B cell (primary cell): ENCODE measurements at regions of chr11 and their contacts with region 1.

Region 1: GRCh38 chr11:63478896-63479295 is 12.1 kb downstream of the PLAAT5 start:
- DNase-seq: peak; percentile 76
- ATAC-seq: peak; percentile 66
- H3K4me3 ChIP-seq: no peak overlapping the region
- H3K4me3 Mint-ChIP-seq: no peak overlapping the region
- H3K27ac ChIP-seq: no peak overlapping the region
- H3K27ac Mint-ChIP-seq: no peak overlapping the region
- H3K4me1 ChIP-seq: no peaks in the 10 kb centered on the region
- H3K4me1 Mint-ChIP-seq: no peaks in the 10 kb centered on the region
- H3K27me3 ChIP-seq: peaks cover 0 to 21% (median 19%) of the 10 kb centered on the region in 4 experiments
- H3K27me3 Mint-ChIP-seq: peaks cover 42% of the 10 kb centered on the region
- CTCF ChIP-seq: peak; percentile 95

Region 2: GRCh38 chr11:63155794-63156193 is 323.1 kb before region 1 on chr11:
- CTCF ChIA-PET with region 1: no interaction called
- POLR2A ChIA-PET with region 1: no interaction called
- intact Hi-C with region 1: no loop called
- DNase-seq: no peak
- ATAC-seq: no peak
- H3K4me3 ChIP-seq: no peak overlapping the region
- H3K4me3 Mint-ChIP-seq: no peak overlapping the region
- H3K27ac ChIP-seq: no peak overlapping the region
- H3K27ac Mint-ChIP-seq: no peak overlapping the region
- H3K4me1 ChIP-seq: no peaks in the 10 kb centered on the region
- H3K4me1 Mint-ChIP-seq: no peaks in the 10 kb centered on the region
- H3K27me3 ChIP-seq: peaks cover 0 to 5% (median 2%) of the 10 kb centered on the region in 4 experiments
- H3K27me3 Mint-ChIP-seq: peaks cover 25% of the 10 kb centered on the region
- CTCF ChIP-seq: no peak

Region 3: DNA sequence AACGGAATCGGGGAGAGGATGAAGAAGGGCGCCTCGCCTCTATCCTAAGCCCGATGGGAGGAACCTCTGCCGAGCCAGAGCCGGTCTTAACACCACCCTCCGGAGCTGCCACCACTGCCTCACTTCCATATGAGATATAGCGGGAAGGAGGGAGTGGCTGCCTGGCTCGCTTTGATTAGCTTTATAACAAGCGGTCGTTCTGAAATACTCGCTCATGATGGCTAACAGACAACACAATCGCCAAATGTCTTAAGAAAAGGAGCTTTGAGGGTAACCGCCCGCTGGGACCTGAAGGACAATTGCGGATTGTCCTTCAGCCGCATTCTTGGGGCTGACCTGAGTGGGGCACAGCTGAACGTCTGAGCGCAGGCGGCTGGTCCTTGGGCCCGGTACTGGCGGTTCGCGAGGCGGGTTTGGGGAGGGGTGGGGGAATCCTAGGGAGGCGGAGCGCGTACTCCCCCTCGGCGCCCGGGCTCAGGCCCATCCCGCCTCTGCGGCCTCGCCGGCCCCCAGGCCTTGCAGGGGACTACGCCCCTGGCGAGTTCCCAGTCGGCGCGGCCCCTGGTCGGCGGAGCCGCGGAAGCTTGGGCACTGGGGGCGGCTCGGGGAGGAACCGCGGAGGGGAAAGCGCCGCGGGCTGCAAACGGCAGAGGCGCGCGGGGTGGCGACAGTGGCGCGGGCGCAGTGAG is 11.8 kb after region 1 on chr11 and contains the start of gene PLAAT5:
- CTCF ChIA-PET with region 1: interaction called, 25 read pairs
- POLR2A ChIA-PET with region 1: no interaction called
- intact Hi-C with region 1: no loop called
- DNase-seq: no peak
- ATAC-seq: no peak
- H3K4me3 ChIP-seq: peak within 1 kb of the TSS in 1 of 5 experiments; percentile 6
- H3K4me3 Mint-ChIP-seq: peak within 1 kb of the TSS; percentile 58
- H3K27ac ChIP-seq: no peak within 1 kb of the TSS
- H3K27ac Mint-ChIP-seq: no peak within 1 kb of the TSS
- H3K4me1 ChIP-seq: peaks cover 0 to 7% of the 10 kb centered on the region in 2 donors
- H3K4me1 Mint-ChIP-seq: peaks cover 11% of the 10 kb centered on the region
- H3K27me3 ChIP-seq: peaks cover 0 to 28% (median 20%) of the 10 kb centered on the region in 4 experiments
- H3K27me3 Mint-ChIP-seq: peaks cover 65% of the 10 kb centered on the region
- CTCF ChIP-seq: no peak
- total RNA-seq, gene PLAAT5: not detected in 2 replicates

Region 4: GRCh38 chr11:63508009-63508408 is 29.1 kb after region 1 on chr11:
- CTCF ChIA-PET with region 1: interaction called, 10 read pairs
- POLR2A ChIA-PET with region 1: no interaction called
- intact Hi-C with region 1: no loop called
- DNase-seq: no peak
- ATAC-seq: no peak
- H3K4me3 ChIP-seq: no peak overlapping the region
- H3K4me3 Mint-ChIP-seq: no peak overlapping the region
- H3K27ac ChIP-seq: no peak overlapping the region
- H3K27ac Mint-ChIP-seq: no peak overlapping the region
- H3K4me1 ChIP-seq: peaks cover 4 to 7% of the 10 kb centered on the region in 2 donors
- H3K4me1 Mint-ChIP-seq: no peaks in the 10 kb centered on the region
- H3K27me3 ChIP-seq: peaks cover 0 to 26% (median 3%) of the 10 kb centered on the region in 4 experiments
- H3K27me3 Mint-ChIP-seq: peaks cover 27% of the 10 kb centered on the region
- CTCF ChIP-seq: no peak

Region 5: DNA sequence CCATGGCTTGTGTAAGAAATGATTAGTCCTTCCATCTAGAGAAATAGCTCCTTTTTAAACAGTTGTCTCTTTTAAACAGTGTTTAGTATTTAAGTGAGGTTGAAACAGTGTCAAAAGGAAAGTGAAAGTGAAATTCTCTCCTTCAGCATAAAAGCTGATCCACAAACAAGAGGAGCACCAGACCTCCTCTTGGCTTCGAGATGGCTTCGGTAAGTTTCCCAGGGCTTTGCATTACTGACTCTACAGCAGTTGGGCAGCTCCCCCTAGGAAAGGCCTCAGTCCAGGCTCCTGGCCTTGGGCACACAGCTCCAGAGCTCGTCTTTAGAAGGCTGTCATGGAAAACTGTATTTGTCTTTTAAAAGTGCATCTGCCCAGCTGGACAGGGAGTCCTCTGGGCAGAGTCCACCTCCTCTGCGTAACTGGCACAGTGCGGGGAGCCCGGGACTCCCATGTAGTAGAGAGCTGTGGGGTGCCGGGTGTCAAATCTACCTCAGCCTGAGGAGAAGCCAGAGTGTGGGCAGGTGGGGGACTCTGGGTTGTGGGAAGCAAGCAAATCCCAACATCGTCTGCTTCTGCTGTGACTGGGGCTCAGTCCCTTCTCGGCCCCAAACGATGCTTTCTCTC is 57.9 kb after region 1 on chr11 and contains the start of gene PLAAT4:
- CTCF ChIA-PET with region 1: interaction called, 11 read pairs
- POLR2A ChIA-PET with region 1: no interaction called
- intact Hi-C with region 1: no loop called
- DNase-seq: peak; percentile 63
- ATAC-seq: peak; percentile 64
- H3K4me3 ChIP-seq: peak within 1 kb of the TSS; percentile 1 to 89 (median 64)
- H3K4me3 Mint-ChIP-seq: peak within 1 kb of the TSS; percentile 84
- H3K27ac ChIP-seq: peak within 1 kb of the TSS; percentile 63
- H3K27ac Mint-ChIP-seq: peak within 1 kb of the TSS; percentile 86
- H3K4me1 ChIP-seq: peaks cover 22 to 34% of the 10 kb centered on the region in 2 donors
- H3K4me1 Mint-ChIP-seq: peaks cover 43% of the 10 kb centered on the region
- H3K27me3 ChIP-seq: no peaks in the 10 kb centered on the region
- H3K27me3 Mint-ChIP-seq: no peaks in the 10 kb centered on the region
- CTCF ChIP-seq: no peak
- total RNA-seq, gene PLAAT4: 12.6 and 13.1 TPM in 2 replicates

Region 6: GRCh38 chr11:63635762-63636465 is 157.0 kb after region 1 on chr11:
- CTCF ChIA-PET with region 1: interaction called, 202 read pairs
- POLR2A ChIA-PET with region 1: no interaction called
- intact Hi-C with region 1: loop called (anchors 1 kb)
- DNase-seq: peak; percentile 75
- ATAC-seq: peak; percentile 72
- H3K4me3 ChIP-seq: no peak overlapping the region
- H3K4me3 Mint-ChIP-seq: no peak overlapping the region
- H3K27ac ChIP-seq: no peak overlapping the region
- H3K27ac Mint-ChIP-seq: no peak overlapping the region
- H3K4me1 ChIP-seq: peaks cover 0 to 7% of the 10 kb centered on the region in 2 donors
- H3K4me1 Mint-ChIP-seq: peaks cover 7% of the 10 kb centered on the region
- H3K27me3 ChIP-seq: no peaks in the 10 kb centered on the region
- H3K27me3 Mint-ChIP-seq: no peaks in the 10 kb centered on the region
- CTCF ChIP-seq: peak; percentile 87

Region 7: DNA sequence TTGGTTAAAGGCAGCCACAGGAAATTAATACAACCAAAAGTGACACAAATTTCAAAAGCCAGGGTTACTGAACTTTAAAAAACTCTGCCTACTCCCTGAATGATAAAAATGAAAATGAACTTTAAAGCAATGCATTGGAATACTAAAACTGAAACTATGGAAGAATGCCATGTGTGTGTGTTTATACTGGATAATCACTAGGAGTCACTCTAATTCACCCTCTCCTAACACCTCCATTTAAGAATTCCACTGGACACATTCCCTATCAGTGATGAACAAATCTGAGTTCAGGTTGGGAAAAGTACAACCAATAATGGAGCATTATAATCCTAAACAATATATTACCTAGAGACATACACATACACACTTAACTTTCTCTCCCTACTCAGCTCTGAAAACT is 162.8 kb after region 1 on chr11:
- CTCF ChIA-PET with region 1: interaction called, 202 read pairs
- POLR2A ChIA-PET with region 1: no interaction called
- intact Hi-C with region 1: loop called (anchors 1 kb)
- DNase-seq: no peak
- ATAC-seq: no peak
- H3K4me3 ChIP-seq: no peak overlapping the region
- H3K4me3 Mint-ChIP-seq: no peak overlapping the region
- H3K27ac ChIP-seq: no peak overlapping the region
- H3K27ac Mint-ChIP-seq: no peak overlapping the region
- H3K4me1 ChIP-seq: no peaks in the 10 kb centered on the region
- H3K4me1 Mint-ChIP-seq: no peaks in the 10 kb centered on the region
- H3K27me3 ChIP-seq: no peaks in the 10 kb centered on the region
- H3K27me3 Mint-ChIP-seq: no peaks in the 10 kb centered on the region
- CTCF ChIP-seq: no peak

Region 8: GRCh38 chr11:63738720-63739360 is 259.9 kb after region 1 on chr11:
- CTCF ChIA-PET with region 1: interaction called, 146 read pairs
- POLR2A ChIA-PET with region 1: no interaction called
- intact Hi-C with region 1: loop called (anchors 1 kb)
- DNase-seq: peak; percentile 75
- ATAC-seq: peak; percentile 47
- H3K4me3 ChIP-seq: no peak overlapping the region
- H3K4me3 Mint-ChIP-seq: no peak overlapping the region
- H3K27ac ChIP-seq: no peak overlapping the region
- H3K27ac Mint-ChIP-seq: no peak overlapping the region
- H3K4me1 ChIP-seq: no peaks in the 10 kb centered on the region
- H3K4me1 Mint-ChIP-seq: peaks cover 2% of the 10 kb centered on the region
- H3K27me3 ChIP-seq: no peaks in the 10 kb centered on the region
- H3K27me3 Mint-ChIP-seq: no peaks in the 10 kb centered on the region
- CTCF ChIP-seq: peak; percentile 97